ENCODE measurements at regions of chr15 and their contacts with region 1.

Region 1: DNA sequence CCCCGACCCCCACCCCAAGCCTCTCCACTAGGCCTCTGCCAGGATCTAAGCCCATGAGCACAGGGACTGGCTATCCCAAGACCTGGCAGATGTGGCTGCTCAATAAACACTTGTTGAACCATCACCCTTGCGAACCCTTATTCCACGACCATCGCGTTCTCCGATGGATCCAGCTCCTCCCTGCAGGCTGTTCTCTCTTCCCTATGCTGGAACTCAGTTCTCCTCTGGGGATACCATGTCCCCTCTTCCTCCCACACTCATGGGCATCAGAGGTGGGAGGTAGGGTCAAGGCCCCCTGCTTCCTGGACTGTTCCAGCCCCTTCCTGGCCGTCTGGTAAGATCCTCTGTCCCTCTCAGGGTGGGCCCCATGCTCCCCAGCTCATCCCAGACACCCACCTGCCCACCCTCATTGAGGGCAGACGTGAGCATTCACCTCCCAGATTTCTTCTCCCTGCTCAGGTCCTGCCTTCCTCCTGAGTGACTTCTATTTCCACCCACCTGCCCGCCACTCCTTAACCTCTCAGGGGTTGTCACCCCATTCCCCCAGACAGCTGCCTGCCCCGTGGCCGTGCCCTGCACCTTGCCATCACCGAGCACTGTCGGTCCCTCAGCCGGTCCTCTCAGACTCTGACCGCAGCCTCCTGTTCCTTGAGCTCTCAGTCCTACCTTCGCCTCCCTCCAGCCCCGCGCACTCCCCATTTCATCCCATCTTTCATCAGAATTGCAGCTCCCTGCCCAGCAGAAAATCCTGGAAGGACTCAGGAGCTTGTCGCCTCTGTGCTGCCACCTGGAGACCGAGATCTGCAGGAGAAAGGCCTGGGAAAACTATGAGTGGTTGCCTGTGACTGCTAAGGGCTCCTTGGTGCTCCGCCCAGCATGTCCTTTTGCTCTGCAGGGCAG is 42.0 kb downstream of the PML start:
- DNase-seq: no peak
- ATAC-seq: no peak
- H3K4me3 ChIP-seq: no peak overlapping the region
- H3K4me3 Mint-ChIP-seq: no peak overlapping the region
- H3K27ac ChIP-seq: no peak overlapping the region
- H3K27ac Mint-ChIP-seq: peak overlapping the region in 4 of 9 donors; percentile 14 to 82 (median 56)
- H3K4me1 ChIP-seq: no peaks in the 10 kb centered on the region
- H3K4me1 Mint-ChIP-seq: peaks cover 0 to 4% (median 0%) of the 10 kb centered on the region in 7 donors
- H3K27me3 ChIP-seq: no peaks in the 10 kb centered on the region
- H3K27me3 Mint-ChIP-seq: no peaks in the 10 kb centered on the region

Region 2: DNA sequence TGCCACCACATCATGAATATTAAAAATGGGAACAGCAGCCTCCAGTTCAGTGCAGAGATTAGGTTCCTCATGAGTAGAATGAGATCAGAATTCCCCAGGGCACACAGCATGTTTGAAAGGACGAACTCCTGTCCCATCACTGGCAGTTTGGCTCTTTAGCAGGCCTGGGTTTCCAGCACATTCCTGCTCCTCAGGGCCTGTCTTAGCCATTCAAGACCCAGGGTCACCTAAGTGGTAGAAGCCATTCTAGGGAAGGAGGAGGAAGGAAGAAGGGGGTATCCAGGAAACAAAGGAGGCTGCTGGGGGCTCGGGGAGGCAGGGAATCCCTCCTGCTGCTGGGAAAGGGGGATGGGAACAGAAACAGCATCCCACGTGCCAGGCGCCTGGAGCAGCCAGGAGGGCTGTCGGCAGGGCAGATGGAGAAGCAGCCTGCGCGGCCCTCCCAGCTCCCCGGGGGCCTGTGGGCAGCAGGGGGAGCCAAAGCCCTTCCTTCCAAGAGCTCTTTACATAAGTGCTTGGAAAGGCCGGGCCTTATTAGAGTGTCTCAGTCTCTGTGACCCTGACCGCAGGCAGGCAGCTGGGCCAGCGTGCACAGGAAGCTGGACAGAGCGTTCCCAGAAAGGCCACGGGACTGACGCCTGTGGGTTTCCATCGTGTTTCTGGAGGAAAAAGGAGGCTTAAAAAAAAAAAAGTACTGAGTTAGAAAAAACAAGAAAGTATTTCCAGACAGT is 85.5 kb before region 1 on chr15:
- CTCF ChIA-PET with region 1: interaction called, 5 read pairs
- POLR2A ChIA-PET with region 1: no interaction called
- intact Hi-C with region 1: loop called in 1 of 2 experiments (anchors 1 kb)
- DNase-seq: peak; percentile 53 to 76 (median 71)
- ATAC-seq: peak; percentile 89
- H3K4me3 ChIP-seq: no peak overlapping the region
- H3K4me3 Mint-ChIP-seq: peak overlapping the region in 1 of 10 donors; percentile 23
- H3K27ac ChIP-seq: no peak overlapping the region
- H3K27ac Mint-ChIP-seq: peak overlapping the region; percentile 10 to 97 (median 83)
- H3K4me1 ChIP-seq: peaks cover 0 to 6% of the 10 kb centered on the region in 2 donors
- H3K4me1 Mint-ChIP-seq: peaks cover 4 to 9% (median 7%) of the 10 kb centered on the region in 7 donors
- H3K27me3 ChIP-seq: no peaks in the 10 kb centered on the region
- H3K27me3 Mint-ChIP-seq: peaks cover 0 to 3% (median 0%) of the 10 kb centered on the region in 5 donors

Region 3: GRCh38 chr15:74053941-74054529 is 17.5 kb after region 1 on chr15:
- CTCF ChIA-PET with region 1: interaction called, 14 read pairs
- POLR2A ChIA-PET with region 1: no interaction called
- intact Hi-C with region 1: no loop called
- DNase-seq: peak; percentile 38 to 73 (median 71)
- ATAC-seq: peak; percentile 99
- H3K4me3 ChIP-seq: no peak overlapping the region
- H3K4me3 Mint-ChIP-seq: peak overlapping the region in 9 of 10 donors; percentile 4 to 61 (median 46)
- H3K27ac ChIP-seq: no peak overlapping the region
- H3K27ac Mint-ChIP-seq: peak overlapping the region in 1 of 9 donors; percentile 37
- H3K4me1 ChIP-seq: peaks cover 0 to 1% of the 10 kb centered on the region in 2 donors
- H3K4me1 Mint-ChIP-seq: peaks cover 7 to 18% (median 12%) of the 10 kb centered on the region in 7 donors
- H3K27me3 ChIP-seq: no peaks in the 10 kb centered on the region
- H3K27me3 Mint-ChIP-seq: no peaks in the 10 kb centered on the region

Region 4: GRCh38 chr15:74511583-74511982 is 475.1 kb after region 1 on chr15:
- CTCF ChIA-PET with region 1: no interaction called
- POLR2A ChIA-PET with region 1: no interaction called
- intact Hi-C with region 1: no loop called
- DNase-seq: no peak
- ATAC-seq: peak; percentile 3
- H3K4me3 ChIP-seq: no peak overlapping the region
- H3K4me3 Mint-ChIP-seq: peak overlapping the region in 1 of 10 donors; percentile 59
- H3K27ac ChIP-seq: no peak overlapping the region
- H3K27ac Mint-ChIP-seq: peak overlapping the region in 1 of 9 donors; percentile 50
- H3K4me1 ChIP-seq: no peaks in the 10 kb centered on the region
- H3K4me1 Mint-ChIP-seq: peaks cover 0 to 14% (median 0%) of the 10 kb centered on the region in 7 donors
- H3K27me3 ChIP-seq: no peaks in the 10 kb centered on the region
- H3K27me3 Mint-ChIP-seq: no peaks in the 10 kb centered on the region

Region 5: GRCh38 chr15:74937596-74938296 is 901.2 kb after region 1 on chr15 and contains the start of gene COX5A:
- CTCF ChIA-PET with region 1: no interaction called
- POLR2A ChIA-PET with region 1: no interaction called
- intact Hi-C with region 1: no loop called
- DNase-seq: peak; percentile 86 to 94 (median 92)
- ATAC-seq: peak; percentile 99
- H3K4me3 ChIP-seq: peak within 1 kb of the TSS; percentile 62
- H3K4me3 Mint-ChIP-seq: peak within 1 kb of the TSS; percentile 87 to 97 (median 94)
- H3K27ac ChIP-seq: peak within 1 kb of the TSS; percentile 85
- H3K27ac Mint-ChIP-seq: peak within 1 kb of the TSS; percentile 85 to 95 (median 91)
- H3K4me1 ChIP-seq: peaks cover 0 to 17% of the 10 kb centered on the region in 2 donors
- H3K4me1 Mint-ChIP-seq: peaks cover 16 to 38% (median 26%) of the 10 kb centered on the region in 7 donors
- H3K27me3 ChIP-seq: no peaks in the 10 kb centered on the region
- H3K27me3 Mint-ChIP-seq: peaks cover 0 to 3% (median 0%) of the 10 kb centered on the region in 5 donors
- total RNA-seq, gene COX5A: 44.4 to 210 (median 59.2) TPM